ENCODE measurements at regions of chr3 and their contacts with region 1.

Region 1: DNA sequence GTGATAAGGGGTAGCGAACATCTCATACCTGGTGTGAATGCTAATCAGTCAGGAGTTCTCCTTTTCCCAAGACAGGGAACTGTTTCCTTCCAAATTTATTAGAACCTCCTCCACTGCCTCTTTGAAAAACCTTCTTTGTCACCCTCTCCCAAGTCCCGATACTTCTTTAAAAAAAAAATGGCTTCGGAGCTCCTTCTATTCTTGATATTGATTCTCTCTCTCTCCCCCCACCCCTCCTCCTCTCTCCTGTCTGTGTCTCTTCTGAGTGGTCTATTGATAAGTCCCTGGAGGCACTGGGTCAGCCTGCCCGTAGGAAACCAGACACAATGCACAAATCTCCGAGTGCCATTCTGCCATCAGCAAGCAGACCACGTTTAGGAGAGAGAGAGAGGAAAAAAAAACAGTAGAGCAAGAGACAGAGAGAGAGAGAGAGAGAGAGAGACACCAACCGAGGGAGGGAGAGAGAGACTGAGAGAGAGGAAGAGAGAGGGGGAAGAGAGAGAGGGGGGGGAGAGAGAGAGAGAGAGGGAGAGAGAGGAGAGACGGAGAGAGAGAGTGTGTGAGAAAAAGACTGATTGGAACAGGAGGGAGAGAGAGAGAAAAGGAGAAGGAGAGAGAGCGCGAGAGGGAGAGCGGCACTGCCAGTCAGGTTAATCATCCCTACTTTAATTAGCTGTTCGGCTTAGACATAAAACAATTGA is 160.9 kb downstream of the TIGIT start:
- DNase-seq: peak; percentile 67
- ATAC-seq: peak; percentile 14
- H3K4me3 ChIP-seq: peak overlapping the region; percentile 11 to 71 (median 53)
- H3K4me3 Mint-ChIP-seq: no peak overlapping the region
- H3K27ac ChIP-seq: peak overlapping the region; percentile 79 to 92
- H3K27ac Mint-ChIP-seq: no peak overlapping the region
- H3K4me1 ChIP-seq: peaks cover 47 to 55% of the 10 kb centered on the region in 2 donors
- H3K4me1 Mint-ChIP-seq: peaks cover 40% of the 10 kb centered on the region
- H3K27me3 ChIP-seq: no peaks in the 10 kb centered on the region
- H3K27me3 Mint-ChIP-seq: no peaks in the 10 kb centered on the region
- CTCF ChIP-seq: no peak

Region 2: DNA sequence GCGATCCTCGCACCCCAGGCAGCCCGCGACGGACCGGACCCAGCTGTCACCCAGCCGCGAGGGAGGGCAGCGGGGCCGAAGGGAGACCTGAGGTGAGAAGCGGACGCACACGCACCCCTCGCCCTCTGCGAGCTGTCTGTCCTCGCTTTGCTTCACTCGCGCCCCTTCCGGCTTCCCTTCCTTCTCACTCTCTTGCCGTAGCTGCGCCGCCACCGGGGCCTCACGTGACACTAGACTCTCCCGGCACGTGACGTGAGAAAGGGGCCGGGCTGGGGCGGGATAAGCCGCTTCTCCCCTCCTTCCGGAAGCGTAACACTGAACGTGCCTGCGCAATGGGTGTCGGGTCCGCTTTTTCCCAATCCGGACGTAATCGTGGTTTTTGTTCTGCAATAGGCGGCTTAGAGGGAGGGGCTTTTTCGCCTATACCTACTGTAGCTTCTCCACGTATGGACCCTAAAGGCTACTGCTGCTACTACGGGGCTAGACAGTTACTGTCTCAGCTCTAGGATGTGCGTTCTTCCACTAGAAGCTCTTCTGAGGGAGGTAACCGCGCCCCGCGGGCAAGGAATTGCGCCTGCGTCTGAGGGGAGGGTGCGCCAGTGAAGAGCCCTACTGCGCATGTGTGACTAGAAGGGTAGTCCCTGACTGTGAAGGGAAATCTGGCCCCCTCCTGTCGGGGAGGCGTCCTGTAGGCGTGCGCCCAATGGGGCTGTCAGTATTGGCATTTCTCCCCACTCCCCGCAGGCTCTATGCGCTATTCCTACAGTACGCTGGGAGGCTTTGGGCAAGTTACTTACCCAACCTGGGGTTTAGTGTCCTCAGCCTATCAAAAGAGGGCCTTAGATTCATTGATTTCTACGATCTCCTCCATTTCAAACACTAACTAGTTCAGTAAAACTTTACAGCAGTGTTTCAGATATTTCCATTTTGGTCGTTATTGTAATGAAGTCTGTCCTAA is 1892.7 kb before region 1 on chr3 and contains the starts of genes ATG3 and SLC35A5:
- CTCF ChIA-PET with region 1: no interaction called
- POLR2A ChIA-PET with region 1: no interaction called
- intact Hi-C with region 1: loop called (anchors 5 kb)
- DNase-seq: peak; percentile 99
- ATAC-seq: peak; percentile 79
- H3K4me3 ChIP-seq: peak within 1 kb of the TSS; percentile 75 to 99 (median 94)
- H3K4me3 Mint-ChIP-seq: peak within 1 kb of the TSS; percentile 99
- H3K27ac ChIP-seq: peak within 1 kb of the TSS; percentile 93 to 96
- H3K27ac Mint-ChIP-seq: peak within 1 kb of the TSS; percentile 100
- H3K4me1 ChIP-seq: peaks cover 23 to 34% of the 10 kb centered on the region in 2 donors
- H3K4me1 Mint-ChIP-seq: peaks cover 50% of the 10 kb centered on the region
- H3K27me3 ChIP-seq: no peaks in the 10 kb centered on the region
- H3K27me3 Mint-ChIP-seq: no peaks in the 10 kb centered on the region
- CTCF ChIP-seq: no peak
- total RNA-seq, gene ATG3: 48.8 and 54.9 TPM in 2 replicates
- total RNA-seq, gene SLC35A5: 32.1 and 34.9 TPM in 2 replicates

Region 3: DNA sequence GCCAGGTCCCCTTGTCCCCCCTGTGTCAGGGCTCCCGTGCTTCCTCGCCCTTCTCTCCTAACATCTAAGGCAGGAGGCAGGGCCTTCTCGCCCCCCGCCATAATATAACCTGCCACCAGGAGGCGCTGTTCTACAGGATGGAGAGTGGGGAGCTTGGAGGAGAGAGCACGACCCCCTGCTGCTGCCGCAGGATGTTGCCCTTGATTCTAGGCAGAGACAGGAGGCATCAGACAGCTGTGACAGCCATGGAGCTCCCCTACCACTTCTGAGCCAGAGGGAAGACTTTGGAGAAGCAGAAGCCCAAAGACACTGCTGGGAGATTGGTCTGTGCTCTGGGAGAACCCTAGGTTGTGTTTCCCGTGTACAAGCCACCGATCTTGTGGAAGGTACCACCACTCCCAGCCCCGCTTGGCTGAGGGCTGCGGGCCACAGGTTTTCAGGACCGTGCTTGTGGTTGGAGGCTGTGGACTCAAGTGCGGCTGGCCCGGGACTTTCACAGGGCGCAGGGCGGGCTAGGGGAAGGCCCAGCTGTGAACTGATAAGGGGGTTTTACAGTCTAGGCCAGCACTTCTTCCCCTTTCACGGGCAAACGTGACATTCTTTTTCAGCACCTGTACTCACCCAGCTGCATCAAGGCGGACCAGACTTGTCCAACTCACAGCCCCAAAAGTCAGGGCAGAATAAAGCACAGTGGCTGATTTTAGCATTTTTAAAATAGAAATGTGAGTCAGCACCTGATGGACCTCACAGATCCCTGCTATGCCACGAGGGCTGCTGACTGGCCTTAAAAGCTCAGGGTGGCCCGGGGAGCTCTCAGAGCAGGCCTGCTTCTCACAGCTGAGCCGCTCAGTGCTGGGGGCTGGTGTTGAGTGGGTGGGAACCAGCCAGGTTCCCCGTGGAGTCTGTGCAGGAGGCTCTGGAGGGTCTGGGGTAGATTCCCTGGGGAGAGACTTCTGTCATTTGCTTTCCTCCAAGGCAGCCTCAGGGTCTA is 163.5 kb before region 1 on chr3:
- CTCF ChIA-PET with region 1: no interaction called
- POLR2A ChIA-PET with region 1: interaction called, 15 read pairs
- intact Hi-C with region 1: no loop called
- DNase-seq: peak; percentile 94
- ATAC-seq: peak; percentile 86
- H3K4me3 ChIP-seq: peak overlapping the region in 2 of 5 experiments; percentile 33 to 40
- H3K4me3 Mint-ChIP-seq: peak overlapping the region; percentile 83
- H3K27ac ChIP-seq: peak overlapping the region; percentile 93
- H3K27ac Mint-ChIP-seq: peak overlapping the region; percentile 97
- H3K4me1 ChIP-seq: peaks cover 13 to 18% of the 10 kb centered on the region in 2 donors
- H3K4me1 Mint-ChIP-seq: peaks cover 30% of the 10 kb centered on the region
- H3K27me3 ChIP-seq: no peaks in the 10 kb centered on the region
- H3K27me3 Mint-ChIP-seq: no peaks in the 10 kb centered on the region
- CTCF ChIP-seq: peak; percentile 92

Region 4: DNA sequence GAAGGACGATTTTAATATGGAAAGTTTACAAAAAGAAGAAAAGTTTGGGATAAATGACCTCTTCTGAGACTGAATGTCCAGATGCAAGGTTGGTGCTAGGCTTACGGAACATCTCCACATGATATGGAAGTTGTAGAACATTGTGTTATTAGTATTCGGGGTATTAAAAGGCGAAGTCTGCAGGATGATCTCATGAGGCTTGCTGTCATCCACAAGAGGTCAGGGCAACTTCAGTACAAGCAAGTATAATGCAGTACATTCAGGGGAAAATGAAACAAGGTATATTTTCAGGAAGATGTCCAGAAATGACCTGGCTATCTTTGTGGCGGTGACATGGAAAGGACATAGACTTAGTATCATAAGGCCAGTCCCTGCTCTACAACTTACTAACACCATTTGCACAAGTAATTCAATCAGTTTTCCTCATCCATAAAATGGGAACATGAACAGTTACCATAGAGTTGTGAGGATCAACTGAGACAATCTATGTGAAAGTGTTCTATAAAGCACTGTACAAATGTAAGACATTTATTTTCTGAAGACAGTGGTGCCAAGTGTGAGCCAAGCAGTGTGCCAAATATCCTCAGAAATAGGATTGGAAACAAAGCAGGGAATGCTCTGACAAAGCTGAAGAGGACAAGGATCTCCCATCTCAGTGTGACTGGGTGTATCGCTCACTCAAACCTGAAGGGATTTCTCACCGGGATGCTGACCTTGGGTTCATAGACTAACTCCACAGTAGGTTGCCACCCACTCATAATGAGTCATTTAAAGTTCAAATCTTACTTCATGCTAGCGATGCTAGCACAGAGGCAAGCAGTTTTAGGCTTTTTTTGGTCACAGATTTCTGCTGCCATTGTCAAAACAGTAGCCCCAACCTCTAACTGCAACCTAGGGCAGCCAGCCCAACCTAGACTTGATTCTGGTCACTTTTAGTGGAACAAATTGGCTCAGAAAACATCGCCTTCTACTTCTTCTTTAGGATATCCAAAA is 42.6 kb before region 1 on chr3:
- CTCF ChIA-PET with region 1: interaction called, 203 read pairs
- POLR2A ChIA-PET with region 1: interaction called, 11 read pairs
- intact Hi-C with region 1: loop called (anchors 5 kb)
- DNase-seq: no peak
- ATAC-seq: no peak
- H3K4me3 ChIP-seq: no peak overlapping the region
- H3K4me3 Mint-ChIP-seq: no peak overlapping the region
- H3K27ac ChIP-seq: no peak overlapping the region
- H3K27ac Mint-ChIP-seq: no peak overlapping the region
- H3K4me1 ChIP-seq: no peaks in the 10 kb centered on the region
- H3K4me1 Mint-ChIP-seq: peaks cover 40% of the 10 kb centered on the region
- H3K27me3 ChIP-seq: no peaks in the 10 kb centered on the region
- H3K27me3 Mint-ChIP-seq: no peaks in the 10 kb centered on the region
- CTCF ChIP-seq: no peak

Region 5: GRCh38 chr3:114435386-114436115 is 19.1 kb before region 1 on chr3:
- CTCF ChIA-PET with region 1: interaction called, 36 read pairs
- POLR2A ChIA-PET with region 1: interaction called, 3 read pairs
- intact Hi-C with region 1: no loop called
- DNase-seq: no peak
- ATAC-seq: no peak
- H3K4me3 ChIP-seq: no peak overlapping the region
- H3K4me3 Mint-ChIP-seq: no peak overlapping the region
- H3K27ac ChIP-seq: no peak overlapping the region
- H3K27ac Mint-ChIP-seq: no peak overlapping the region
- H3K4me1 ChIP-seq: peaks cover 13 to 15% of the 10 kb centered on the region in 2 donors
- H3K4me1 Mint-ChIP-seq: peaks cover 61% of the 10 kb centered on the region
- H3K27me3 ChIP-seq: no peaks in the 10 kb centered on the region
- H3K27me3 Mint-ChIP-seq: no peaks in the 10 kb centered on the region
- CTCF ChIP-seq: no peak

Region 6: DNA sequence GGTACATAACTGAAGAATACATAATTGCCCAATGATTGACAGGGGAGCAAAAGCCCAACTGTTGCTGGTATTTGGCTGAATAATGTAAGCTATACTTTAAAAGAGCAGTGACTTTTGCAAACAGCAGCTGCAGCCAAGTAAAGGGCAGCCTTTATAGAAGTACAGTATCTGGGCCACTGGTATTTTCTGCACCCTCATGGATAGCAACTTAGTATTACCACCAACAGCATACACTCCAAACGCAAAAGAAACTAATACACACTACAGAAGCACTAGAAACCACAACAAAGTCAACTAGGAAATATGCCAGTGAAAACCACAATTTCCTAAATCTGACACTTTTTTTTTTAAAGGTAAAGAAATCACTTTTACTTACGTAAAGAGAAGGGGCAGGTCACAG is 45.3 kb after region 1 on chr3:
- CTCF ChIA-PET with region 1: no interaction called
- POLR2A ChIA-PET with region 1: interaction called, 4 read pairs
- intact Hi-C with region 1: loop called (anchors 5 kb)
- DNase-seq: peak; percentile 20
- ATAC-seq: peak; percentile 28
- H3K4me3 ChIP-seq: no peak overlapping the region
- H3K4me3 Mint-ChIP-seq: peak overlapping the region; percentile 32
- H3K27ac ChIP-seq: no peak overlapping the region
- H3K27ac Mint-ChIP-seq: no peak overlapping the region
- H3K4me1 ChIP-seq: peaks cover 7 to 9% of the 10 kb centered on the region in 2 donors
- H3K4me1 Mint-ChIP-seq: peaks cover 20% of the 10 kb centered on the region
- H3K27me3 ChIP-seq: no peaks in the 10 kb centered on the region
- H3K27me3 Mint-ChIP-seq: no peaks in the 10 kb centered on the region
- CTCF ChIP-seq: no peak

Region 7: GRCh38 chr3:115147329-115148141 is 692.8 kb after region 1 on chr3:
- CTCF ChIA-PET with region 1: no interaction called
- POLR2A ChIA-PET with region 1: interaction called, 8 read pairs
- intact Hi-C with region 1: loop called (anchors 2 kb)
- DNase-seq: peak; percentile 100
- ATAC-seq: peak; percentile 74
- H3K4me3 ChIP-seq: peak overlapping the region; percentile 82 to 96 (median 86)
- H3K4me3 Mint-ChIP-seq: peak overlapping the region; percentile 90
- H3K27ac ChIP-seq: peak overlapping the region; percentile 97 to 99
- H3K27ac Mint-ChIP-seq: peak overlapping the region; percentile 97
- H3K4me1 ChIP-seq: peaks cover 11 to 20% of the 10 kb centered on the region in 2 donors
- H3K4me1 Mint-ChIP-seq: peaks cover 31% of the 10 kb centered on the region
- H3K27me3 ChIP-seq: no peaks in the 10 kb centered on the region
- H3K27me3 Mint-ChIP-seq: no peaks in the 10 kb centered on the region
- CTCF ChIP-seq: no peak